ENCODE measurements at regions of chr17 and their contacts with region 1.

Region 1: DNA sequence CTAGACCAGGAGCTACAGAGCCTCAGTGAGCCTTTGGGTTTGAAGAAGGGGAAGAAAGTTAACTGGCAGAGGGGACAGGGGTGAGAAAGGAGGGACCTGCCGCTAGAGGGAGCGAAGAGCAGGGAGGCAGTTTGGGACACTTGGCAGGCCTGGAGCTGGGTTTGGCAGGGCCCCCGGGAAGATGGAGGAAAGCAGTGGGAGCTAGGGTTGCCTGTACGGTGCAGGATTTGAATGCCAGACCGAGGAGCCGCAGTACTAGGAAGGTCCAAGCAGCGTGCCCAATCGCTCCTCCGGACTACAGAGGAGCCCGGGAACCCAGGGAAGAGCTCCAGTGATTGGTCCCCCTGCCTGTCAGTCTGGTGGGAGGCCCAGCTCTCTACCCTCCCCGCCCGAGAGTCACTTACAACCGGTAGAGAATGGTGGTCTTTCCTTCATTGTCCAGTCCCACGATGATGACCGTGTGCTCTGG is 1.3 kb downstream of the ARL5C start:
- DNase-seq: peak; percentile 25
- ATAC-seq: peak; percentile 87
- H3K4me3 ChIP-seq: peak overlapping the region; percentile 17 to 25
- H3K27ac ChIP-seq: 0 out of 2 replicates have a peak overlapping the region, but pooled peaks have one; percentile 23
- H3K4me1 ChIP-seq: peaks cover 4% of the 10 kb centered on the region; the same call in 1 of the 2 replicates
- H3K27me3 ChIP-seq: no peaks in the 10 kb centered on the region
- CTCF ChIP-seq: peak; percentile 76

Region 2: DNA sequence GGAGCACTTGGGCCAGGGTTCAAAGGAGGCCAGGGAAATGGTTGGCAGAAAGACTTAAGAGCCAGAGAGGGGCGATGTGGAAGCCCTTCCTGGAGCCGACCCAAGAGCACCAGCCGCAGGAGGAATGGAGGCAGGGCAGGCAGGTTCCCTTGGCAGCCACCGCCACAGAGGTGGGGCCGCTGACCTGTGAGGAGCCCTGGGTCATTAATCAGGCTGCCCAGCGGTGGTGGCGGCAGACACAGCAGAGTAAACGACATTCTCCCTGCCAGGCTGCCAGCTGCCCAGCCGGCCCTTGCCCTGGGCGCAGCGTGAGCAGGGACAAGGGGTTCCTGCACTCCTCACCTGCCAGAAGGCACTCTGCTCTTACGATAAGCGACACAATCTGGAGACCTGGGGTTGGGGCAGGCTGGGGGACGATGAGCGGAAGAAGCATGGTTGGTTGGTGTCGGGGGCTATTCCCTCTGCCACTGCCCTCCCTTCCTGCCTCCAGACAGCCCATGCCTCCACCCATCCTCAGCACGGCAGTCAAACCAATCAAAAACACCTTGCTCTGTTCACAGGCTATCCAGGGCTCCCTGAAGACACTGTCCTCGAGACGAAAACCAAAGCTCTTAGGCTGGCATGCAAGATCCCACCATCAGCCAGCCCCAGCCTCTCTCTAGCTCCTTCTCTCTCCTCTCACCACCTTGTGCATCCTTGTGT is 54.1 kb before region 1 on chr17:
- CTCF ChIA-PET with region 1: no interaction called
- POLR2A ChIA-PET with region 1: no interaction called
- in situ Hi-C with region 1: no loop called
- intact Hi-C with region 1: no loop called
- DNase-seq: no peak
- ATAC-seq: no peak
- H3K4me3 ChIP-seq: no peak overlapping the region
- H3K27ac ChIP-seq: no peak overlapping the region
- H3K4me1 ChIP-seq: no peaks in the 10 kb centered on the region
- H3K27me3 ChIP-seq: no peaks in the 10 kb centered on the region
- CTCF ChIP-seq: no peak

Region 3: DNA sequence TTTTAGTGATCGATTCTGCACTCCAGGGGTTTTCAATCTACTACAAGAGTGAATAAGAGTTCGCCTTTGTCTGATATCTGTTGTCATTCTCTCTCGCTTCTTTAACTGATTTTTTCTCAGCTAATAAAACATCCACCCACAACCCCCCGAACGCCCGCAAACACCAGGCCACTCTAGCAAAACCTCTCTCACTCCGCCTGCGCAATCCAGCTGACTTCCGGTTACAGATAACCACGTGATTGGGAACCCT is 35.0 kb after region 1 on chr17:
- CTCF ChIA-PET with region 1: interaction called, 7 read pairs
- POLR2A ChIA-PET with region 1: interaction called, 10 read pairs
- in situ Hi-C with region 1: no loop called
- intact Hi-C with region 1: no loop called
- DNase-seq: peak; percentile 59
- ATAC-seq: peak; percentile 76
- H3K4me3 ChIP-seq: peak overlapping the region; percentile 78 to 93
- H3K27ac ChIP-seq: peak overlapping the region; percentile 97
- H3K4me1 ChIP-seq: peaks cover 28% of the 10 kb centered on the region
- H3K27me3 ChIP-seq: no peaks in the 10 kb centered on the region
- CTCF ChIP-seq: no peak

Measured in Panc1 (cell line).